ENCODE measurements at regions of chr14 and their contacts with region 1.

Region 1: GRCh38 chr14:54329082-54329695 is 67.6 kb upstream of the CDKN3 start:
- DNase-seq: peak; percentile 60 to 70
- ATAC-seq: peak; percentile 85 to 96
- H3K4me3 ChIP-seq: no peak overlapping the region
- H3K27ac ChIP-seq: no peak overlapping the region
- H3K4me1 ChIP-seq: no peaks in the 10 kb centered on the region
- CTCF ChIP-seq: peak; percentile 68
- EP300 ChIP-seq: no peak
- POLR2A ChIP-seq: no peak
- RAD21 ChIP-seq: peak; percentile 79 to 82

Region 2: DNA sequence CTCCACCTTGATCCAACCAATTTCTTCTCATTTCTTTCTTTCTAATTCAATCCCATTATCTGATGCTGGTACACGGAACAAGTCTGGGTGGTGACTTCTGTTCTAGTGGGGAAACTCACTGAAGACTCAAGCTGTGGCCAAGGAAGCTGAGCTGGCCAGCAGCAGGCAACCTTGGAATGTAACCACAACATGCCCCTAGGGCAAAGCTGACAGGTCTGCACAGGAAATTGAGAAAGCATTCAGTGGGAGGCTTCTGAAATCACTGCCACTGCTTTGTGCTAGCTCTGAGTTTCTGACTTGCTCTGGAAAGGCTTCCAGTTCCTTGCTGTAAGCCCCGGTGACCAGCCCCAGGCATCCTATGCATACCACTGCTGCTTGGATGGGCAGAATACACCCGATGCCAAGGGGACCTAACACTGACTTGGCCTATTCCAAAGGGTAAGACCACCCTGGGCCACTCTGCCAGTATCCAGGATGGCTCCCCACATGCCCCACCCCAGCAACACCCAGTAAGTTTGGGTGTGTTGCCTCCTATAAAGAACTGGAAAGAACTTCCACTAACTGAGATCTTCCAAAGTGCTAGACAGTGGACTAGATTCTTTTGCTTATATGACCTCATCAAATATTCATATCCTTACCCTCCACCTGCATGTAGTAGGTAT is 16.9 kb before region 1 on chr14:
- CTCF ChIA-PET with region 1: interaction called, 20 read pairs
- POLR2A ChIA-PET with region 1: no interaction called
- DNase-seq: peak; percentile 24 to 40
- ATAC-seq: peak; percentile 32 to 66; a peak in 4 of 6 replicates
- H3K4me3 ChIP-seq: no peak overlapping the region
- H3K27ac ChIP-seq: peak overlapping the region in 1 of 2 experiments; percentile 36; a peak in 2 of 6 replicates
- H3K4me1 ChIP-seq: peaks cover 9% of the 10 kb centered on the region; the same call in 2 of the 3 replicates
- CTCF ChIP-seq: no peak
- EP300 ChIP-seq: no peak
- POLR2A ChIP-seq: no peak
- RAD21 ChIP-seq: no peak

Region 3: DNA sequence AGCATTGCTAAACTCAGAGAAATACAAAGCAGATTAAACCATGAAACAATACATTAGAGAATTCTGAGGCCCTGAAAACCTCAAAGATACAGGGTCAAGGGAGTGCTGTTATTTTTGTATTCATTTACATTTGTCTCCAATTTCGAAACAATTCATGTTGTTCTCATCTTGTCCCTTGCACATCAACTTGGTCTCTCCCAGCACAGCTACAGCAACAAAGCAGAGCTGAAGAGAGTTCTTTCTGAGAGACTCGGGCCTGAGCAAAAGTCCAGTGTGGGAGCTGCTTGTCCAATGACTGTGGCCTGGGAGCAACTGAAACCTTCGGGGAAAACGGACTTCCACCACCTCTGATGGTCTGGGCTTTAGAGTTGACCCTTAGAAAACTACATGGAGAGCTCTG is 11.8 kb before region 1 on chr14:
- CTCF ChIA-PET with region 1: interaction called, 20 read pairs
- POLR2A ChIA-PET with region 1: no interaction called
- DNase-seq: no peak
- ATAC-seq: no peak
- H3K4me3 ChIP-seq: no peak overlapping the region
- H3K27ac ChIP-seq: no peak overlapping the region
- H3K4me1 ChIP-seq: peaks cover 3% of the 10 kb centered on the region; the same call in 2 of the 3 replicates
- CTCF ChIP-seq: no peak
- EP300 ChIP-seq: no peak
- POLR2A ChIP-seq: no peak
- RAD21 ChIP-seq: no peak